Psoas muscle (tissue), 8 donors: ENCODE measurements at regions of chr17 and their contacts with region 1.

Region 1: DNA sequence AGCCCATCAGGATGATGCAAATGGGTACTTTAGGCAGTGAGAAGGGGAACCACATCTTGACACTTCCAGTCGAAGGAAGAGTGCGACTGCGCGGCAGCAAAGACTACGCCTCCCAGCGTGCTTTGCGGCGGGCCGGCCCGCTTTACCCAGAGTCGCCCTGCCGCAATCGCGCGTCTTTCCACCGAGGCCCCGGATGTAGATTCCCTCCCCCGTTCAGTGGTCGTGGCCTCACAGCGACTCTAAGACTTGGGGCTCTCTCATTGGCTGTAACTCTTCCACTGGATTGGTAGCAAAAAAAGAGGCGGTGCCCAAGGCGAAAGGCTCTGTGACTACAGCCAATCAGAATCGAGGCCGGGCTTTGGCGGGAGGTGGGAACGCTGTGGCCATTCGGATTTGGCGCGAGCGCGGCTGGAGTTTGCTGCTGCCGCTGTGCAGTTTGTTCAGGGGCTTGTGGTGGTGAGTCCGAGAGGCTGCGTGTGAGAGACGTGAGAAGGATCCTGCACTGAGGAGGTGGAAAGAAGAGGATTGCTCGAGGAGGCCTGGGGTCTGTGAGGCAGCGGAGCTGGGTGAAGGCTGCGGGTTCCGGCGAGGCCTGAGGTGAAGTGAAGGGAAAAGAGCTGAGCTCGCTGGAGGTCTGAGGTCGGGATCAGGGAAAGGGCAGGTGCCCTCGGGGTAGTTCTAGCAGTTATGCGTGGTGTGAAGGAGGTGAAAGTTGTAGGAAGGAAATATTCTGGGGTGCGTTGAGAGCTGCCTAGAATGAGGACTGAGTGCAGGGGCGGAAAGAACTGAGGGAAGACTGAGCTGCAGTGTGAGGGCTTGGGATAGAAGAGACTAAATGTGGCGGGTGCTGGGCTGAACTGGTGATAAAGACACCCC is at the start of gene CDC6:
- DNase-seq: peak; percentile 99
- ATAC-seq: peak; percentile 98
- H3K4me3 ChIP-seq: peak within 1 kb of the TSS; percentile 67
- H3K27ac ChIP-seq: no peak within 1 kb of the TSS
- H3K4me1 ChIP-seq: peaks cover 20% of the 10 kb centered on the region
- H3K27me3 ChIP-seq: no peaks in the 10 kb centered on the region
- CTCF ChIP-seq: no peak
- total RNA-seq, gene CDC6: 0.27 to 0.90 (median 0.42) TPM

Region 2: GRCh38 chr17:40019140-40019991 is 268.4 kb before region 1 on chr17:
- intact Hi-C with region 1: loop called in 1 of 2 experiments (anchors 10 kb)
- DNase-seq: peak; percentile 81 to 93
- ATAC-seq: peak; percentile 46 to 56 (median 48)
- H3K4me3 ChIP-seq: no peak overlapping the region
- H3K27ac ChIP-seq: peak overlapping the region; percentile 87
- H3K4me1 ChIP-seq: peaks cover 84% of the 10 kb centered on the region
- H3K27me3 ChIP-seq: no peaks in the 10 kb centered on the region
- CTCF ChIP-seq: no peak

Region 3: GRCh38 chr17:40203131-40203530 is 84.6 kb before region 1 on chr17:
- intact Hi-C with region 1: loop called (anchors 1 to 5 kb)
- DNase-seq: no peak
- ATAC-seq: no peak
- H3K4me3 ChIP-seq: no peak overlapping the region
- H3K27ac ChIP-seq: no peak overlapping the region
- H3K4me1 ChIP-seq: no peaks in the 10 kb centered on the region
- H3K27me3 ChIP-seq: no peaks in the 10 kb centered on the region
- CTCF ChIP-seq: no peak

Region 4: GRCh38 chr17:40219073-40219860 is 68.5 kb before region 1 on chr17 and contains the start of gene WIPF2:
- intact Hi-C with region 1: loop called in 1 of 2 experiments (anchors 5 kb)
- DNase-seq: peak; percentile 96 to 98
- ATAC-seq: peak; percentile 99 to 100 (median 100)
- H3K4me3 ChIP-seq: peak within 1 kb of the TSS; percentile 80
- H3K27ac ChIP-seq: peak within 1 kb of the TSS; percentile 90
- H3K4me1 ChIP-seq: peaks cover 6% of the 10 kb centered on the region
- H3K27me3 ChIP-seq: no peaks in the 10 kb centered on the region
- CTCF ChIP-seq: peak; percentile 79
- total RNA-seq, gene WIPF2: 6.8 to 9.6 (median 8.4) TPM